HEK293 (cell line): ENCODE measurements at regions of chr5 and their contacts with region 1.

Region 1: GRCh38 chr5:134209477-134210240 is 16.2 kb downstream of the PPP2CA start:
- H3K4me3 ChIP-seq: no peak overlapping the region
- H3K27ac ChIP-seq: no peak overlapping the region
- H3K4me1 ChIP-seq: peaks cover 27% of the 10 kb centered on the region
- CTCF ChIP-seq: no peak

Region 2: GRCh38 chr5:134184155-134185135 is 25.2 kb before region 1 on chr5:
- CTCF ChIA-PET with region 1: interaction called, 10 read pairs
- POLR2A ChIA-PET with region 1: no interaction called
- H3K4me3 ChIP-seq: no peak overlapping the region
- H3K27ac ChIP-seq: no peak overlapping the region
- H3K4me1 ChIP-seq: no peaks in the 10 kb centered on the region
- CTCF ChIP-seq: peak; percentile 90